ENCODE measurements at regions of chr10 and their contacts with region 1.

Region 1: DNA sequence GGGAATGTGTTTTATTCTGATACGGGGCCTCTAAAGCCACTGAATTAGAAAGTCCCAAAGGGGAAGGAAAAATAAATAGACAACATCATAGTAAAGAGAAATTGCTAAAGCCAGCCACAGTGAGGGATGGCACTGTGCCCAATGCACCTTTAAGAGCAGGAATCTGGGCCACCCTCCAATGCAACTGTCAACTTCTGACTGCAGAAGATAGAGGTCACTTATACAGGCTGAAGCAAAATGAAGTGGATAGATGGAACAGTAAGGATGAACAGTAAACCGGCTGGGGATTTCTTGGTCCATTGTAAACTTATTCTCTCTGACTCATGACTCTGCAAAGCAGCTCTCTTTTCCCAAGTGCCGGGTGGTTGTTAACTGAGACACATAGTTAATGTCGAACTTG is 54.0 kb upstream of the KCNIP2 start:
- DNase-seq: no peak
- ATAC-seq: no peak
- H3K4me3 ChIP-seq: no peak overlapping the region
- H3K27ac ChIP-seq: peak overlapping the region; percentile 29
- H3K4me1 ChIP-seq: peaks cover 44% of the 10 kb centered on the region
- H3K27me3 ChIP-seq: no peaks in the 10 kb centered on the region
- CTCF ChIP-seq: no peak
- EP300 ChIP-seq: no peak
- POLR2A ChIP-seq: no peak
- RAD21 ChIP-seq: no peak

Region 2: GRCh38 chr10:101995451-101996063 is 97.9 kb after region 1 on chr10:
- CTCF ChIA-PET with region 1: interaction called, 543 read pairs
- POLR2A ChIA-PET with region 1: interaction called, 26 read pairs
- RAD21 ChIA-PET with region 1: interaction called, 352 read pairs
- SMC1A ChIA-PET with region 1: interaction called, 369 read pairs
- in situ Hi-C with region 1: no loop called
- intact Hi-C with region 1: no loop called
- DNase-seq: no peak
- ATAC-seq: no peak
- H3K4me3 ChIP-seq: no peak overlapping the region
- H3K27ac ChIP-seq: peak overlapping the region; percentile 13; the same call in 1 of the 2 replicates
- H3K4me1 ChIP-seq: peaks cover 21% of the 10 kb centered on the region
- H3K27me3 ChIP-seq: no peaks in the 10 kb centered on the region
- CTCF ChIP-seq: no peak
- EP300 ChIP-seq: no peak
- POLR2A ChIP-seq: no peak
- RAD21 ChIP-seq: no peak